Naive thymus-derived CD8-positive, alpha-beta T cell (primary cell): ENCODE measurements at regions of chr13 and their contacts with region 1.

Region 1: GRCh38 chr13:51803422-51804294 is at the start of gene DHRS12:
- DNase-seq: peak; percentile 77 to 94 (median 88)
- ATAC-seq: peak; percentile 72 to 73
- H3K4me3 Mint-ChIP-seq: peak within 1 kb of the TSS; percentile 89 to 99 (median 95)
- H3K27ac Mint-ChIP-seq: peak within 1 kb of the TSS; percentile 97 to 100 (median 100)
- H3K4me1 Mint-ChIP-seq: peaks cover 19 to 59% (median 55%) of the 10 kb centered on the region in 4 donors
- H3K27me3 Mint-ChIP-seq: peaks cover 0 to 3% (median 0%) of the 10 kb centered on the region in 5 donors
- polyA plus RNA-seq, gene DHRS12: 22.1 to 33.2 (median 26.0) TPM

Region 2: DNA sequence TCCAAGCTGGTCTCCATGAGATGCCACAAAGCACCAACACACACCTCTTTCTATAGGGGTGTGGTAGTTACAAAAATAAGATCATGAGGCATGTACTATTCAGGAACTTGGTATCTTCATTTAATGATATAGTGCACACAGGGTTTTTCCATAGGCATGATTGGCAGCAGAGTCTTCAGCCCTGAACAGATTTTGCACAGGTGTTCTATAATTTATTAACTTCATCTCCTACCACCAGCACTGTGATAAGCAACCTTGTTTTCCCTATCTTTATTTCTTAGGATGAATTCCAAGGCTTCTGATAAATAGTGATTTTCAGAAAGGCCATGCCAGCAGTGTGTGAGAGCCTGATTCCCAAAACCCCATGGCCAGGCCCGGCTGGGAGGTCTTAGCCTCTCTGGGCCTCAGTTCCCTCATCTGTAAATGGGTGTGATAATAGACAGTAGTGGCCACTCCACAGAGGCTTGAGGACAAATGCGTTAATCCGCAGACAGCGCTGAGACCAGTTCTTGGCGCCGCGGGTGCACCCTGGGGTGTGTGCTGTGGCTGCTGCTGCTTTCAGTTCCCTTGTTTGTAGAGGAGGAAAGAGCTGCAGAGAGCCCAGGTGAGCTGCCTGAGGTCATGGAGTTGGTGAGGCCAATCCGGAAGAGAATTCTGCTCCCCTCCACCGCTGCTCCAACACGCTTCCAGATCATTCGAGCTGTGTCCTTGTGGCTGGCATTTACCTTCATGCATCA is 32.8 kb before region 1 on chr13:
- POLR2A ChIA-PET with region 1: no interaction called
- DNase-seq: no peak
- ATAC-seq: no peak
- H3K4me3 Mint-ChIP-seq: no peak overlapping the region
- H3K27ac Mint-ChIP-seq: peak overlapping the region in 6 of 10 donors; percentile 12 to 71 (median 33)
- H3K4me1 Mint-ChIP-seq: peaks cover 0 to 3% (median 1%) of the 10 kb centered on the region in 4 donors
- H3K27me3 Mint-ChIP-seq: no peaks in the 10 kb centered on the region

Region 3: GRCh38 chr13:51832471-51833152 is 29.0 kb after region 1 on chr13:
- POLR2A ChIA-PET with region 1: interaction called, 173 read pairs
- DNase-seq: peak in 9 of 10 donors; percentile 51 to 84 (median 66)
- ATAC-seq: peak; percentile 97 to 98
- H3K4me3 Mint-ChIP-seq: peak overlapping the region in 7 of 10 donors; percentile 46 to 73 (median 56)
- H3K27ac Mint-ChIP-seq: peak overlapping the region; percentile 3 to 91 (median 86)
- H3K4me1 Mint-ChIP-seq: peaks cover 42 to 84% (median 63%) of the 10 kb centered on the region in 4 donors
- H3K27me3 Mint-ChIP-seq: no peaks in the 10 kb centered on the region

Region 4: GRCh38 chr13:51895906-51896888 is 92.5 kb after region 1 on chr13:
- POLR2A ChIA-PET with region 1: no interaction called
- DNase-seq: peak in 7 of 10 donors; percentile 11 to 64 (median 29)
- ATAC-seq: peak in 1 of 2 donors; percentile 58
- H3K4me3 Mint-ChIP-seq: no peak overlapping the region
- H3K27ac Mint-ChIP-seq: peak overlapping the region in 1 of 10 donors; percentile 48
- H3K4me1 Mint-ChIP-seq: peaks cover 0 to 4% (median 0%) of the 10 kb centered on the region in 4 donors
- H3K27me3 Mint-ChIP-seq: peaks cover 4 to 15% (median 11%) of the 10 kb centered on the region in 5 donors